ENCODE measurements at regions of chr7 and their contacts with region 1.

Region 1: GRCh38 chr7:81482600-81483186 is 287.2 kb downstream of the HGF start:
- DNase-seq: no peak
- ATAC-seq: peak; percentile 72
- H3K4me3 ChIP-seq: no peak overlapping the region
- H3K27ac ChIP-seq: no peak overlapping the region
- H3K4me1 ChIP-seq: peaks cover 0 to 3% of the 10 kb centered on the region in 2 donors
- H3K27me3 ChIP-seq: no peaks in the 10 kb centered on the region

Region 2: DNA sequence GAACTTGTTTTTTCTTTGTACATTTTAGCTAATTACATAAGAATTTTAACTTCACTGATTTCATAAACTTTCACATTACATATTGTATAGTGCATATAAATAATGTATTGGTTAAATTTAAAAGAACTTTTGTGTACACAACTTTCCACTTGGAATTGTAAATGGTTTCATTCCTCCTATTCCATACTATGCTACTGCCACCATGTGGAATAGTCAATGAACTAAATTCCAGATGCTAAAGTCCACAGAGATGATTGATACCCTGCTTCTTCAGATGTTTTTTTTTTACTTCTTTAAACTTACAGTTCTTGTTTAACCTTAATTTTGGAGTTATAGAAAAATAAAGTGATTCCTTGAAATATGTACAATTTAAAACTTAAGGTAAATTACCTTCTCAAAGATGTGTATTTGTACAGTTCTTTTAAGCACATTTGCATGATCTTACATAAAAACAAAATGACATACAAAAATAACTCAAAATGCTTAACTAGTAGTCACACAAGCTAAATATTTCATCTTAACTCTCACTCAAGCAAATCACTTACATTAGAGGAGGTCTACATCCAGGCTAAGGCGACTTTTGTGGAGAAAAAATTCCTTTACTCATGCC is 534.7 kb after region 1 on chr7:
- intact Hi-C with region 1: loop called in 1 of 2 experiments (anchors 5 kb)
- DNase-seq: no peak
- ATAC-seq: no peak
- H3K4me3 ChIP-seq: no peak overlapping the region
- H3K27ac ChIP-seq: no peak overlapping the region
- H3K4me1 ChIP-seq: peaks cover 0 to 2% of the 10 kb centered on the region in 2 donors
- H3K27me3 ChIP-seq: no peaks in the 10 kb centered on the region

Region 3: GRCh38 chr7:82572195-82572880 is 1089.6 kb after region 1 on chr7:
- intact Hi-C with region 1: loop called in 1 of 2 experiments (anchors 10 kb)
- DNase-seq: peak; percentile 88 to 92
- ATAC-seq: peak; percentile 86
- H3K4me3 ChIP-seq: no peak overlapping the region
- H3K27ac ChIP-seq: no peak overlapping the region
- H3K4me1 ChIP-seq: no peaks in the 10 kb centered on the region
- H3K27me3 ChIP-seq: no peaks in the 10 kb centered on the region

Region 4: DNA sequence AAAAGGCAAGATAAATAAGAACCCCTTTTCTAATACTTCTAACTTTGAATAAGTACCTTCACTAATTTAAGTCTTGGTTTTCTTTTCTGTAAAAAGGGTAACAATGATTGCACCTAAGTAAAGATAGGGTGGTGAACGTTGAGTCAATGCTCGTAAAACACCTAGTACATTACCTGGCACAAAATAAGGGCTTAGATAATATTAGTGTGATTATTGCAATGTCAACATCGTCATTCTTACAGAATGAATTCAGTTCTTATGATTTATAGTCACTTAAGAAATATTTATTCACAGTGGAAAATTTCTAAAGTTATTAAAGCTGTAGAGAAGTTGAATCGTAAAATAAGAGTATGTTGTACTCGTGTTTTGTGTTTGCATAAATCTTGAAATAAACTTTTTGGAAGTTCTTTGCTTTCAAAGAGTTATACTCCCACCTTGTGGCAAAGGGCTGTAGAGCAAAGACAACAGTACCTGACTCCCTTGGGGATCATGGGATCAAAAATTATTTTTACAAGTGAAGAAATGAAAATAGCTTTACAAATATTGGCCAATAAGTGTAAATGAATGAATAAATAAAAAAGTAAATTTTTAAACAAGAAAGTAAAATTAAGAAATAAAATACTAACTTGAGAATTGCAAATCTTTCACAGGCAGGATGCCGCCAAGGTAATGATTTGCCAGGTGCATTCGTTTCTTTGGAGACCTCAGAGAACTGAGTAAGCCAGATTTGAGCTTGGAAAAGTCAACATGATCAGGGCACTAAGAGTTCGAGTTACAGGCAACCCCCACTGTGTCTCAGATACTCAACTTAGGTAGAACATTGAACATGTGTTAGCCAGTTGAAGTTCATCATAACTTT is 1246.7 kb after region 1 on chr7:
- intact Hi-C with region 1: loop called in 1 of 2 experiments (anchors 10 kb)
- DNase-seq: no peak
- ATAC-seq: no peak
- H3K4me3 ChIP-seq: no peak overlapping the region
- H3K27ac ChIP-seq: no peak overlapping the region
- H3K4me1 ChIP-seq: no peaks in the 10 kb centered on the region
- H3K27me3 ChIP-seq: no peaks in the 10 kb centered on the region